ENCODE measurements at regions of chr13 and their contacts with region 1.

Region 1: GRCh38 chr13:24671386-24672107 is 8.7 kb upstream of the ATP12A start:
- DNase-seq: peak; percentile 19 to 45 (median 38)
- H3K4me3 ChIP-seq: peak overlapping the region in 6 of 7 experiments; percentile 25 to 80 (median 54)
- H3K27ac ChIP-seq: no peak overlapping the region
- H3K4me1 ChIP-seq: peaks cover 0 to 16% (median 10%) of the 10 kb centered on the region in 4 experiments
- H3K27me3 ChIP-seq: peaks cover 0 to 2% (median 0%) of the 10 kb centered on the region in 5 experiments

Region 2: GRCh38 chr13:22979092-22979491 is 1692.5 kb before region 1 on chr13:
- CTCF ChIA-PET with region 1: no interaction called
- POLR2A ChIA-PET with region 1: no interaction called
- DNase-seq: no peak
- H3K4me3 ChIP-seq: no peak overlapping the region
- H3K27ac ChIP-seq: no peak overlapping the region
- H3K4me1 ChIP-seq: no peaks in the 10 kb centered on the region
- H3K27me3 ChIP-seq: peaks cover 0 to 2% (median 0%) of the 10 kb centered on the region in 5 experiments

Region 3: GRCh38 chr13:24574847-24575246 is 96.7 kb before region 1 on chr13:
- CTCF ChIA-PET with region 1: interaction called, 23 read pairs
- POLR2A ChIA-PET with region 1: interaction called, 3 read pairs
- DNase-seq: peak in 2 of 3 donors; percentile 38 to 50
- H3K4me3 ChIP-seq: no peak overlapping the region
- H3K27ac ChIP-seq: no peak overlapping the region
- H3K4me1 ChIP-seq: peaks cover 0 to 5% (median 0%) of the 10 kb centered on the region in 4 experiments
- H3K27me3 ChIP-seq: no peaks in the 10 kb centered on the region

Region 4: GRCh38 chr13:24605923-24606372 is 65.6 kb before region 1 on chr13:
- CTCF ChIA-PET with region 1: interaction called, 10 read pairs
- POLR2A ChIA-PET with region 1: no interaction called
- DNase-seq: peak in 2 of 3 donors; percentile 39 to 80
- H3K4me3 ChIP-seq: no peak overlapping the region
- H3K27ac ChIP-seq: no peak overlapping the region
- H3K4me1 ChIP-seq: peaks cover 0 to 7% (median 5%) of the 10 kb centered on the region in 4 experiments
- H3K27me3 ChIP-seq: no peaks in the 10 kb centered on the region

Region 5: DNA sequence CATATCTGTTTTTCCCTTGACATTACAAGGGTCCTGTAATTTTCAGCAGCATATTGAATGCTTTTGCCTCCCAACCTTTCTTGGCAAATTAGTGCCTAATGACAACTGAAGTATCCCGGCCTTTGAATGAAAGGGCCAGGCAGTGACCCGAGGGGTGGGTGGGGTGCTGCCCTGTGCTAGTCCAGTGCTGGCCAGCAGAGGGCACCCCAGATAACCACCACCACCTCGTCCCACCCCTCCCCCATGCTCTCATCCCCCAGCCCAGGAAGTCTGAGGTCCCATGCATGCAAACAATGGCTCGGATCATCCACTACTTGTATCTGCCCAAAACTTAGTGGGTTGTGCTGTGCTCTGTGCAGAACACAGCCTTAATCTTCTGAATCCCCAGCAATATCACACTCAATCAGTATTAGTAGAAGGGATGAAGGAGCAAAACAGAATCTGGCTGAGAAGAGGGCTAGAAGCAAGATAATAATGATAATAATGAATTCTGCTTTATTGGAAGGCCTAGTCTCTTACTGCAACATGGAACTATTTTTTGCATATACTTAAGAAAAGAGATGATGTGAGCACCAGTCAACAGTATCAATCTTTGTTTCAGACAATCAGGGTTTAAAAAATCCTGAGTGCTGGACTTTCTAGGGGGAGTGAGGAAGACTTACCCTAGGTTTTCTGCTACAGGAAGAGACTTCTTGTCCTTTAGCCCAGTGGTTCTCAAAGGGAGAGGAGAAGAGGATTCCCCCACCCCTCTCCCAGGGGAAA is 12.5 kb after region 1 on chr13:
- CTCF ChIA-PET with region 1: interaction called, 29 read pairs
- POLR2A ChIA-PET with region 1: no interaction called
- DNase-seq: peak; percentile 52 to 61 (median 58)
- H3K4me3 ChIP-seq: no peak overlapping the region
- H3K27ac ChIP-seq: no peak overlapping the region
- H3K4me1 ChIP-seq: peaks cover 4 to 33% (median 30%) of the 10 kb centered on the region in 4 experiments
- H3K27me3 ChIP-seq: peaks cover 0 to 29% (median 16%) of the 10 kb centered on the region in 5 experiments